Activated CD8-positive, alpha-beta T cell treated with anti-CD3 and anti-CD28 coated beads for 36 hours (primary cell): ENCODE measurements at regions of chr12 and their contacts with region 1.

Region 1: DNA sequence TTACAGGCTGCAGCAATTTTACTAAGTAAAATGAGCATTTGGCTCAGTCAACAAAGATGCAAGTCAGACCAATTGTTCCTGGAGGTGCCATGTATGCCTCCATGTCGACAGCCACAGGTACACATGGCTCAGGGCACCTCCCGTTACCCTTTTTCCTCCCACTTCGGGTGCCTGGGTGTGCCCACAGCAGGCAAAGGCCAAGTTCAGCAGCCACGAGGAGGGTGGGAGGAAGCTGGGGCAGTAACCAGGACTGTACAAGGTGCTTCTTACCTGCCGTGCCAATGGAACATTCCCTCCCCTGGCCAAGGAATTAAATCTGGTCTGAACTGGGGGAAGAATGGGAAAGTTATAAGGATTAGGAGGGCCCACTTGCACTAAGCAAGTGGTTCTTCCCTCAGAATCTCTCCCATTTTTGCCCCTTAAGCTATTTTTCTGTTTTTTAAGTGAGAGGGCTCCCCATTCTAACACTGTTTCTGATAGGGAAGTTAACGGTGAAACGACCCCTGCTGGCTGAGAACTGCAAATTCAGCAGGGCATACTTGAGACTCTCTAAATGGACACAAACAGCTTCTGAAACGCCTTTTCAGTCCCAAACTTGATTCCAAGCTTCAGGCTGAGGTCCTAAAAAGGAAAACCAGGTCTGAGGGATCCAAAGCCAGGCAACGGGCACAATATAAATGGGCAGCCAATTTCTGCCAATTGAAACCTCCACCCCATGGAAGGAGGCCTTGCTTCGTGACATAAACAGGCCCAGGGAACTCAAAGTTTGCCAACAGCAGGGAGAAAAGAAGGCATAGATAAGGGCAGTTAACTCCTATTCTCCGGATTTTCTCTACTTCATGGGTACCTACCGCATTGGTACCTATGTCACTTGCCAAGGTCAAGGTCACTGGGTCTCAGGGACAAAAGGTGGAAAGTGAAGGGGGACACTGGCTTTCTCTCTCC is 24.8 kb downstream of the CLECL1 start:
- DNase-seq: peak; percentile 80
- ATAC-seq: peak; percentile 89
- H3K4me3 Mint-ChIP-seq: peak overlapping the region; percentile 61
- H3K27ac Mint-ChIP-seq: peak overlapping the region; percentile 92
- H3K4me1 Mint-ChIP-seq: peaks cover 46% of the 10 kb centered on the region
- H3K27me3 Mint-ChIP-seq: no peaks in the 10 kb centered on the region
- CTCF ChIP-seq: peak; percentile 81

Region 2: DNA sequence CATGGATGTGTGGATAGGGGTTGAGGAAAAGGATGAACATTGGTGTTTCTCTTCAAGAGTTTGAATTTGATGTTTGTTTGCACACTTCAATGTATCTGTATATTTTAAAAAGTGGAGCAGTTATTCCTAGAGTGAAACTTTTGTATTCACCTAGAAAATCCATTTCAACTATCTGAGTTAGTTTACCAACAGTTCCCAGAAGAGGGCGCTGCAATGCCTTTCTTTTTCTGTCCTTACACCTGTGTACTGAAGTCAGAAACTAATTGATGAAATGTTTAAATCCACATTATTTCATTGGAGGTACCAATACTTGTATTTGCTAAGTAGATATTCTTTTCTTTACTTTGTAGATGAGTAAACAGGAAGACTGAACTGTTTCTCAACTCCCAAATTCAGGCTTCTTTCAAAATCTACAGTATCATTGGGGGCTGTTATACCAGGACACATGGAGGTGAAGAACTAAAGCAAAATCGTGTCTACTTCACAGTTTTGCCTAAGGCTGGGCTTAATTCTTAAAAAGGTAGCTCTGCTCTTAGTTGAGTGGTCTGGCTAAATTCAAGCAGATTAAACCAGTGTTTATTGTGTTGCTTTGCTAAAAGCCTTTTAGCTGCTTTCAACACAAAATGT is 73.8 kb before region 1 on chr12:
- CTCF ChIA-PET with region 1: interaction called, 63 read pairs
- POLR2A ChIA-PET with region 1: interaction called, 3 read pairs
- intact Hi-C with region 1: loop called (anchors 2 kb)
- DNase-seq: peak; percentile 92
- ATAC-seq: peak; percentile 89
- H3K4me3 Mint-ChIP-seq: peak overlapping the region; percentile 31
- H3K27ac Mint-ChIP-seq: peak overlapping the region; percentile 85
- H3K4me1 Mint-ChIP-seq: peaks cover 54% of the 10 kb centered on the region
- H3K27me3 Mint-ChIP-seq: no peaks in the 10 kb centered on the region
- CTCF ChIP-seq: peak; percentile 91

Region 3: DNA sequence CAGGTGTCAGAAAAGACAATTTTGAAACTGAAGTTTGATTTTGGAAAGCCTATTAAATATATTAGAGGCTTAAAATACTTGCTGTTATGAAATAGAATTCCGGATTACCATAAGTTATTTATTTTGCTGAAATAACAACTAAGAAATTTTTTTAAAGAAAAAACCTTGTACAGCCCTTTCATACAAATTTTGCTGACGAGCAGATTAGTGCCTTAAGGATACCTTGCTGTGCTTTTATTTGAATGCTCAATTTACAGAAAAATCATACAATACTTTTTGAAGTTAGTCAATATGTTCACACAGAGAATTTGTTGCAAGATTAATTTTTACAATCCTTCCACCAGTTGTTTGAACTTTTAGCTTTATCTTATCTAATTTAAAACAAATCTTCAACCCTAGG is 68.1 kb before region 1 on chr12:
- CTCF ChIA-PET with region 1: interaction called, 63 read pairs
- POLR2A ChIA-PET with region 1: no interaction called
- intact Hi-C with region 1: loop called (anchors 2 kb)
- DNase-seq: no peak
- ATAC-seq: no peak
- H3K4me3 Mint-ChIP-seq: no peak overlapping the region
- H3K27ac Mint-ChIP-seq: no peak overlapping the region
- H3K4me1 Mint-ChIP-seq: peaks cover 69% of the 10 kb centered on the region
- H3K27me3 Mint-ChIP-seq: no peaks in the 10 kb centered on the region
- CTCF ChIP-seq: no peak

Region 4: DNA sequence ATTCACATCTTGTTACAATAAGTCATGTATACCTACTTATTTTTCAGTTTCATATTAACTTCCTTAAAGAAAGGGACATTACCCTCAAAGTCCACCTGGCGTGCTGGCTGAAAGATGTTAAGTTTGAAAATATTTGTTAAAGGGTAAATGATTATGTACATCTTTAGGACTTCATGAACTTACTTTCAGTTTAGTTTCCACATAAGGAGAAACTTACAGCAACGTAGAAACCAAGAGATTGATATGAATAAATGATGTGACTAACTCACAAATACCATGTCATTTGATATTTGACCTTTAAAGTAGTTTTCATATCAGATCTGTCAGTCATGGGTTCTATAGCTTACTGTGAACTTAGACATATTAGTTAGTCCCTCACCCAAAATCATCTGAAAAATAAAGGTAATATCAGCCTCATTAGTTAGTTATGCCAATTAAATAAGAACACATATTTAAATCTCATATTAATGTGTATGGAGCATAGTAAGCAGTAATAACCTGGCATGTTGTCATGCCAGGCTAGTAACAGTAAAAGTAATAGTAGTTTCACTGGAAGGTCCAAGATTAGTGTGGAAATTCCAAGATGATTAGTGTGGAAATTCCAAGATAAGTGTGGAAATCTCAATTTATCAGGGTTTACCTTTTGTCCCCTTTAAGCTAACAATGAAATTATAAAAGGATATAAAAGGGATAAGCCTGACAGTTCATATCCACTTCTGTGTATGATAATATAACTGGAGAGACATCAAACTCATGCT is 40.6 kb before region 1 on chr12:
- CTCF ChIA-PET with region 1: interaction called, 18 read pairs
- POLR2A ChIA-PET with region 1: interaction called, 10 read pairs
- intact Hi-C with region 1: no loop called
- DNase-seq: peak; percentile 69
- ATAC-seq: peak; percentile 60
- H3K4me3 Mint-ChIP-seq: peak overlapping the region; percentile 94
- H3K27ac Mint-ChIP-seq: peak overlapping the region; percentile 99
- H3K4me1 Mint-ChIP-seq: peaks cover 52% of the 10 kb centered on the region
- H3K27me3 Mint-ChIP-seq: no peaks in the 10 kb centered on the region
- CTCF ChIP-seq: no peak

Region 5: GRCh38 chr12:9687228-9687627 is 20.9 kb before region 1 on chr12:
- CTCF ChIA-PET with region 1: interaction called, 9 read pairs
- POLR2A ChIA-PET with region 1: interaction called, 10 read pairs
- intact Hi-C with region 1: no loop called
- DNase-seq: peak; percentile 43
- ATAC-seq: peak; percentile 70
- H3K4me3 Mint-ChIP-seq: no peak overlapping the region
- H3K27ac Mint-ChIP-seq: peak overlapping the region; percentile 42
- H3K4me1 Mint-ChIP-seq: peaks cover 74% of the 10 kb centered on the region
- H3K27me3 Mint-ChIP-seq: no peaks in the 10 kb centered on the region
- CTCF ChIP-seq: no peak

Region 6: GRCh38 chr12:9721394-9722092 is 13.4 kb after region 1 on chr12:
- CTCF ChIA-PET with region 1: interaction called, 67 read pairs
- POLR2A ChIA-PET with region 1: interaction called, 12 read pairs
- intact Hi-C with region 1: no loop called
- DNase-seq: no peak
- ATAC-seq: peak; percentile 51
- H3K4me3 Mint-ChIP-seq: no peak overlapping the region
- H3K27ac Mint-ChIP-seq: no peak overlapping the region
- H3K4me1 Mint-ChIP-seq: peaks cover 34% of the 10 kb centered on the region
- H3K27me3 Mint-ChIP-seq: peaks cover 4% of the 10 kb centered on the region
- CTCF ChIP-seq: no peak

Region 7: DNA sequence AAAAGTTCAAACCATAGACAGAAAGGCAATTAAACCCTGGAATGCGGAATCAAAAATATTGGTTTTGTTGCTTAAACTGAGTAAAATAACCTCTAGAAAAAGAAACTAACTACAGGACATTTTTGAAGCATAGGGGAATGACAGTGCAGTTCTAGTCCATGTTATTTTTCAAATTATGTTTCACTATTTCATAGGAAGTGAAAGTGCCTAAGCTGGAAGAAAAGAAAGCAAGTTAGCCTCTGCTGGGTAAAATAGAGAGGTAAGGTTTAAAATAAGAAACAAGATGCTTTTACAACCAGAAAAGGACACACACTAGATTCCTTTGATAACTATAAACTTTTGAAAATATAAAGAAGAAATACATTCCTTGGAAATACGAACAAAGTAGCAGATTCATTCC is 23.7 kb after region 1 on chr12:
- CTCF ChIA-PET with region 1: interaction called, 20 read pairs
- POLR2A ChIA-PET with region 1: interaction called, 5 read pairs
- intact Hi-C with region 1: no loop called
- DNase-seq: no peak
- ATAC-seq: peak; percentile 65
- H3K4me3 Mint-ChIP-seq: peak overlapping the region; percentile 76
- H3K27ac Mint-ChIP-seq: peak overlapping the region; percentile 88
- H3K4me1 Mint-ChIP-seq: peaks cover 46% of the 10 kb centered on the region
- H3K27me3 Mint-ChIP-seq: no peaks in the 10 kb centered on the region
- CTCF ChIP-seq: no peak

Region 8: DNA sequence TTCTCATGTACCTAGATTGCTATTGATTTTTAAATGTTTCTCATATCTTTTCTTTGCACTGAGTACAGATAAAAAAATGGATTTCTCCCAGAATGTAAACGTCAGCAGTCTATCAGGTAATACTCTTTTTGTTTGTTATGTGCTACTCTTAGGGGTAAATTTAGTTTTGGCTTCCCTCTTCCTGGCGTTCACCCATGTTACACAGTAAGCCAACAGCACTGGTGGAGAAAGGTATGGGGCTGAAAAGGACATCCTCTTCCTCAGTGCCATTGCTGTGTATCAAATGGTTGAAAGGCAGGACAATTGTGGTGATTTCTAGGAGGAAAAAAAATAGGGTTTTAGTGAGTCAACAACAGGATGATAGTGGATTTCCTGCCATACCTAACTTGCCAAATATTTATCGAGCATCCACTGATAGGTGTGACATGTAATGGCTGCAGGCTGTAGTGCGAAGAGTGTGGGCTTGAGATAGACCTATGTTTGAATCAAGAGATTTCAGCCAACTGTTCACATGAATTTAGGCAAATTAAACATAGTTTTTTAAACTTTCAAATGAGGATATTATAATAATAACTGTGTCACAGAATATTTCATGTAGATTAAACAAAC is 180.6 kb after region 1 on chr12:
- CTCF ChIA-PET with region 1: no interaction called
- POLR2A ChIA-PET with region 1: no interaction called
- intact Hi-C with region 1: no loop called
- DNase-seq: no peak
- ATAC-seq: no peak
- H3K4me3 Mint-ChIP-seq: no peak overlapping the region
- H3K27ac Mint-ChIP-seq: no peak overlapping the region
- H3K4me1 Mint-ChIP-seq: peaks cover 9% of the 10 kb centered on the region
- H3K27me3 Mint-ChIP-seq: no peaks in the 10 kb centered on the region
- CTCF ChIP-seq: no peak

Region 9: DNA sequence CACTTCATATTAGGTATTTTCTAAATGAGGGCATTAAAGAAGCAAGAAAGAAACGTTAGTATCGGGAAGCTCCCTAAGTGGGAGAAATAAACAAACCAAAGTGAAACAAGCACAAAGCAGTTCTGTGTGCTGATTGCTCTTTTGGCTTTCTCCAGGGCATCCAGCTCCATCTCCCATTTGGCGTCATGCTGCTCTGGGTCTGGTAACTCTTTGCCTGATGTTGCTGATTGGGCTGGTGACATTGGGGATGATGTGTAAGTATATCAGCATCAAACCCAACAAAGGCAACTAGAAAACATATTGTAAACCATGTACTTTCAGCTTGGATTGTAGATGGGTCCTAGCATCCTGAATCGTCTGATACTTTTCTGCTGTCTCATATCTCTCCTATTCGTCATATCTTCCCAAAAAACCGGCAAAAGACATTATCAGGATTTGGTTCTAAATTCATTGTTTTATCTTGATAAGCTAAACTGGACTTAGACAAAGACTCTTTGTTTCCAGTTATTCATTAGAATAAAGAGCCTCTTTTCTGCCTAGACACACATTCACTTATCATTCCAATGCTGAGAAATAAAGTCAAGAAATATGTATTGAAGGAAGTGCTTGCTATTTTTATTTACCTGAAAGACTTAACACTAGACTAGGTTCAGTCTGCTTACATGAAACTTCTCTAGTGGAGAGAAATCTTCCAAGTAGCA is 304.6 kb after region 1 on chr12:
- CTCF ChIA-PET with region 1: no interaction called
- POLR2A ChIA-PET with region 1: no interaction called
- intact Hi-C with region 1: no loop called
- DNase-seq: no peak
- ATAC-seq: no peak
- H3K4me3 Mint-ChIP-seq: no peak overlapping the region
- H3K27ac Mint-ChIP-seq: no peak overlapping the region
- H3K4me1 Mint-ChIP-seq: no peaks in the 10 kb centered on the region
- H3K27me3 Mint-ChIP-seq: peaks cover 15% of the 10 kb centered on the region
- CTCF ChIP-seq: no peak